ENCODE measurements at regions of chr3 and their contacts with region 1.

Region 1: GRCh38 chr3:115092220-115092791 is 54.8 kb downstream of the ZBTB20 start:
- DNase-seq: peak; percentile 50 to 79 (median 70)
- ATAC-seq: peak; percentile 95 to 98 (median 98)
- H3K4me3 ChIP-seq: no peak overlapping the region
- H3K27ac ChIP-seq: peak overlapping the region in 5 of 12 donors; percentile 5 to 41 (median 16)
- H3K4me1 ChIP-seq: peaks cover 0 to 65% (median 20%) of the 10 kb centered on the region in 12 donors
- H3K27me3 ChIP-seq: no peaks in the 10 kb centered on the region
- CTCF ChIP-seq: peak; percentile 50 to 82 (median 68)
- POLR2A ChIP-seq: no peak

Region 2: GRCh38 chr3:114362815-114363214 is 729.5 kb before region 1 on chr3:
- intact Hi-C with region 1: loop called in 3 of 10 experiments (anchors 5 to 10 kb)
- DNase-seq: no peak
- ATAC-seq: peak in 3 of 4 donors; percentile 29 to 65 (median 54)
- H3K4me3 ChIP-seq: no peak overlapping the region
- H3K27ac ChIP-seq: peak overlapping the region in 10 of 12 donors; percentile 47 to 80 (median 72)
- H3K4me1 ChIP-seq: peaks cover 0 to 50% (median 33%) of the 10 kb centered on the region in 12 donors
- H3K27me3 ChIP-seq: no peaks in the 10 kb centered on the region
- CTCF ChIP-seq: peak in 10 of 12 donors; percentile 33 to 59 (median 48)
- POLR2A ChIP-seq: no peak

Region 3: GRCh38 chr3:114827495-114827894 is 264.8 kb before region 1 on chr3:
- intact Hi-C with region 1: loop called in 8 of 10 experiments (anchors 2 to 10 kb)
- DNase-seq: no peak
- ATAC-seq: peak in 3 of 4 donors; percentile 66 to 68 (median 67)
- H3K4me3 ChIP-seq: no peak overlapping the region
- H3K27ac ChIP-seq: no peak overlapping the region
- H3K4me1 ChIP-seq: peaks cover 0 to 6% (median 0%) of the 10 kb centered on the region in 12 donors
- H3K27me3 ChIP-seq: no peaks in the 10 kb centered on the region
- CTCF ChIP-seq: peak; percentile 49 to 80 (median 66)
- POLR2A ChIP-seq: no peak

Region 4: DNA sequence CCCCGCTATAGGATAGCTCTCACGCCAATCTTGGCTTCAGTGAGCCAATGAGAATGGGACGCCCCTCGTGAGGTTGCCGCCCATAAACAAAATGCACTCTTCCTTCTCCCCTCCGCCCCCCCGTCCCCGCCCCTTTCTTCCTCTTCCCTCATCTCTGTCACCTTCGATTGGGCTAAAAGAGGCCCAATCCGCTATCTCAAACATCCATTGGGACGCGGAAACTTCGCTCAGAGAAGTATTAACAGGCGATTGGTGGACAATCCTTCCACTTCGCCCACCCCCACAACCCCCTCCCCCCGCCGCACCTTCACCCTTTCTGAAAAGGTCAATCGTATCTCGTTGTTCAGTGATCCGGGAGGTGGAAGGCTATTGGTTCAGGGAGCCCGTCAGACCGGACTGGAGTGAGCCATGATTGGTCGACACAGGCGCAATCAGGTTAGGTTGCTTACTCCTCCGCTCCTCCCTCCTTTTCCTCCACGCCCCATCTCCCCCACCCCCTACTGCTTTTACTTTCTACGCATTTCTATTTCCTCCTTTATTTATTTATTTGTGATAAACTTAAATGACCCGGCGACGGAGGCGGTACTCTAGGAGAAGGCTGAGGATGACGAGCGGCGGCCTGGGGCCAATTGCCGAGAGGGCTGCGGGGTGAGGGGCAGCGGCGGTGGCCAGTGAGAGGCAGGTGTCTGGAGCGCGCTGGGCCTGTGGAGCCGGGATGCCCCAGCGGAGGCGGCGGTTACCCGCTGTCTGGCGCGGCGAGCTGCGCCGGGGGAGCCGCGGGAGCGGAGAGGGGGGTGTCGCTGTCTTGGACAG is 55.2 kb after region 1 on chr3:
- intact Hi-C with region 1: loop called in 3 of 10 experiments (anchors 2 to 5 kb)
- DNase-seq: peak; percentile 98 to 99 (median 99)
- ATAC-seq: peak; percentile 90 to 95 (median 94)
- H3K4me3 ChIP-seq: peak overlapping the region; percentile 50 to 98 (median 86)
- H3K27ac ChIP-seq: peak overlapping the region; percentile 96 to 100 (median 98)
- H3K4me1 ChIP-seq: peaks cover 0 to 27% (median 12%) of the 10 kb centered on the region in 12 donors
- H3K27me3 ChIP-seq: no peaks in the 10 kb centered on the region
- CTCF ChIP-seq: no peak
- POLR2A ChIP-seq: peak; percentile 60 to 87

Region 5: DNA sequence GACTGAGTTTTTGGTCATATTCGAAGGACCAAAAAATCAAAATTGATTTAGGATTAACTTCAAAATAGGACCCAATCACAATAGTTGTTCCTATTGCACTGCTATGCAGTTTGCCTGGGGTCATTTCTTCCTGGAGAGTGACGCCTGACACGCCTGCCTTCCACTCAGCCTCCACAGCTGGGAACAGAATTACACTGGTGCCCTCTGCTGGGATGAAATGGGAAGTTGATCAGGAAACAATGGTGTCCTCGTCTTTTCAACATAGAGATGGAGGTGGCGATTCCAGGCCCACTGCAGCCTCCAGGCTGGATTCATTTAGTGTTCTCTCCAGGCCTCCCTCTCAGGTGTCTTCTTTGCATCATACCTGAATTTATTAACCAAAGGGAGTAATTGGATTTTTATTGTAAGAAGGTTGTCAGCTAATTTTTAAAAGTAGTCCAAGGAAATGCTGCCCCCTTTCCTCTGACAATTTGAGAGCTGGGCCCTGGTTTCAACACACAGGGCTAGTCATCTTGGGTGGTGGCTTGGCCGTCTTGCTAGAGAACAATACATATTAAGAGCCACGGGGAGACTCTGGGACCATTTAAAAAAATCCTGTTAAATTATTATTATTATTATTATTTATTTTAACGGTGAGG is 600.7 kb after region 1 on chr3:
- intact Hi-C with region 1: loop called in 1 of 10 experiments (anchors 10 kb)
- DNase-seq: peak; percentile 66 to 75 (median 71)
- ATAC-seq: peak; percentile 80 to 98 (median 96)
- H3K4me3 ChIP-seq: no peak overlapping the region
- H3K27ac ChIP-seq: peak overlapping the region in 1 of 12 donors; percentile 61
- H3K4me1 ChIP-seq: peaks cover 0 to 14% (median 0%) of the 10 kb centered on the region in 12 donors
- H3K27me3 ChIP-seq: no peaks in the 10 kb centered on the region
- CTCF ChIP-seq: peak; percentile 69 to 92 (median 83)
- POLR2A ChIP-seq: no peak